ENCODE measurements at regions of chr2 and their contacts with region 1.

Region 1: DNA sequence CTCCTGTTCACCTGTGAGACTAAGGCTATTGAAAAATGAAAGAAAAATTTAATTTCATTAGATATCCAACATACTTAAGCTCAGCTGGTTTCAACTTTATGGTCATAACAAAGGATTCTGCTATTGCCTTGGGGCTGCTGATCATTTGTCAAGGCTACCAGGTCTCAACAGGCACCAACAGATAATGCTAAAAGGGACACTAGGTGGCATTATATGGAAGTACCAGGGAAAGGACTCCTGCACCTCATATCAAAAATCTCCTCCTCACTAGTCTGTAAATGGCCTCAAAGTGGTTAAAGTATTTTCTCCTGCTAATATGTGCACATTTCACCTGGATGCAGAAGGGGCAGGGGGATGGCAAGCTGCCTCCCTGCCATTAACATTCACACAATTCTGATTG is 167.9 kb upstream of the REG3A start:
- DNase-seq: no peak
- H3K4me3 ChIP-seq: no peak overlapping the region
- H3K27ac ChIP-seq: no peak overlapping the region
- H3K4me1 ChIP-seq: no peaks in the 10 kb centered on the region
- H3K27me3 ChIP-seq: no peaks in the 10 kb centered on the region
- CTCF ChIP-seq: no peak

Region 2: DNA sequence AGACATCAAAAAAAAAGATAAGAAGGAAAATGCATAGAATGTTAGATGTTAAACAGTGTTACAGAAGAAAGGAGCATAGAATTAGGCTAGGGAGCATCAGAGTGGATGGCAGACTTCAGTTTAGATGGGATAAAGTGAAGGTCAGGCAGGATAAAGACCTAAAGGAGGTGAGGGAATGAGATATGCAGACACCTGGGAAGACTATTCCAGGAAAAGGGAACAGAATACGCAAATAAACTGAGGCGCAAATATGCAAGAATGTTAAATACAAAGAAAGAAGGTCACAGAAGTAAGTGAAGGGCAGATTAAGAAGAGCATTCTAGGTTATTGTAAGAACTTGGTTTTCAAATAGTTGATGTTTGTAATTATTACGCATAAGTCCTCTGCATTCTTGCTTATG is 51.6 kb before region 1 on chr2:
- CTCF ChIA-PET with region 1: no interaction called
- dilution Hi-C with region 1: no loop called
- in situ Hi-C with region 1: no loop called
- intact Hi-C with region 1: no loop called
- DNase-seq: no peak
- H3K4me3 ChIP-seq: no peak overlapping the region
- H3K27ac ChIP-seq: no peak overlapping the region
- H3K4me1 ChIP-seq: no peaks in the 10 kb centered on the region
- H3K27me3 ChIP-seq: no peaks in the 10 kb centered on the region
- CTCF ChIP-seq: no peak

Region 3: DNA sequence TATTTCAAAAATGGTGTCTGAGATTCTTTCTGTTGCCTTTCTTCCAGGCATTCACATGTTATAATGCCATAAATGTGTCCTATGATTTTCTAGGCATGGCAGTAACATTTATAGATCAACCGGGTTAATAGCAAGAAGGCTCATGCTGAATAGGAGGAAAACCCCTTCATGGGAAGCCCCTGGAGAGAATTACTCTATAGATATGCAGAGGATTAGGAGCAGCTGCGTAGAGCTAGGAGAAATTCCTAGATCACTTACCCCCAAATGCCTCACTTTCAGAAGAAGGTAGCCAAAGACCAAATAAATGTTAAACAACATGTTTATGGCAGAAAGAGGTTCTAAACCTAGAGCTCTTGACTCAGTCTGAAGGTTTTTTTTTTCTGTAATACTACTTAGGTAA is 32.0 kb after region 1 on chr2:
- CTCF ChIA-PET with region 1: no interaction called
- dilution Hi-C with region 1: no loop called
- in situ Hi-C with region 1: no loop called
- intact Hi-C with region 1: no loop called
- DNase-seq: no peak
- H3K4me3 ChIP-seq: no peak overlapping the region
- H3K27ac ChIP-seq: no peak overlapping the region
- H3K4me1 ChIP-seq: no peaks in the 10 kb centered on the region
- H3K27me3 ChIP-seq: no peaks in the 10 kb centered on the region
- CTCF ChIP-seq: no peak

Region 4: DNA sequence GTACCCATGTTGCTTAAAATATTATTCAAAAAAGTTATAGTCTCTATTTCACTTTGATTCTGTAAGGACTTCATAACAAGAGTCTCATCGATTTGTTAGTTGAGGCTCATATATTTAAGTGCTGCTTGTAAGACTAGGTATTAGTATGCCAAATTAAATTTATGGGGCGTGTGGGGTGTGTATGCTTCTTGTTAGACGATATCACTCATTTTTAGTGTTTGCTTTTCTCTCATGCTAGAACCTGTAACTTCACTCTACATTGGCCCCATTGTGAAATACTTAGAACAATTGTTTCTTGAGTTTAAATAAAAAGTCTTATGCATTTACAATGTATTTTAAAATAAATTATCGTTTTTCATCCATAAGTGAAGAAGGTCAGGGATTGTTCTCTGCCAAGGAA is 249.0 kb after region 1 on chr2:
- CTCF ChIA-PET with region 1: interaction called, 11 read pairs
- dilution Hi-C with region 1: no loop called
- in situ Hi-C with region 1: no loop called
- intact Hi-C with region 1: no loop called
- DNase-seq: no peak
- H3K4me3 ChIP-seq: no peak overlapping the region
- H3K27ac ChIP-seq: no peak overlapping the region
- H3K4me1 ChIP-seq: no peaks in the 10 kb centered on the region
- H3K27me3 ChIP-seq: no peaks in the 10 kb centered on the region
- CTCF ChIP-seq: no peak

Region 5: DNA sequence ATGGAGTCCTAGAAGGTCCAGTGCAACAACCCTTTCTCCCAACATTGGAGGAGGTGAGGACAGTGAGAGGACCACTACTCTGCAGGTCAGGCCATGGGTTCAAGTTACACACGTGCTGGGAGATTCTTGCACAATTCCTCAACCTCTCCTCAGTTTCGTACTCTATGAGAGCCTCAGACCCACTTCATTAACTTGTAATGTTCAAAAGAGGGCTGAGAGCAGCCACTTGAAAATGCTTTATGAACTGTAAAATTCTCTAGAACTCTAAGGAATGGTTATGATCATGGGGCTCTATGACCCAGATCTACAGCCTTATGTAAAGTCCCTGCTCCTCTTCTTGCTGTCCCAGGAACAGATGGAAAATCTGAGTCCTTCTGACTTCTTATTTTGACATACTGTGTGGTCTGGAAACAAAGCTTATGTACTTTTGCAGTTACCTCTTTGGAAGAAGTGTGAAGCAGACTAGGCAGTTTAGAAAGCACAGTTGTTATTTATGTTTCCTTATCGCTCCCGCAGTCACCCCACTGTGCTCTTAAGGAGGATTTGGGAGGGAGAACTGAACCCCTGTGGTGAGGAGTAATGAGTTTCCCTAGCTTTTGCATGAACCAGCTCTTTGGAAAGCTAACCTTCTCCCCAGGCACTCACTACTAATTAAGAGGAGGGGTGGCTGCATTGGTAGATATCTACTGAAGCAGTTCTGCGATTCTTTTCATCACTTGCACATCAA is 680.5 kb after region 1 on chr2:
- CTCF ChIA-PET with region 1: no interaction called
- dilution Hi-C with region 1: no loop called
- in situ Hi-C with region 1: no loop called
- intact Hi-C with region 1: no loop called
- DNase-seq: no peak
- H3K4me3 ChIP-seq: no peak overlapping the region
- H3K27ac ChIP-seq: no peak overlapping the region
- H3K4me1 ChIP-seq: no peaks in the 10 kb centered on the region
- H3K27me3 ChIP-seq: no peaks in the 10 kb centered on the region
- CTCF ChIP-seq: no peak

Measured in mammary epithelial cell (primary cell).